ENCODE measurements at regions of chr9 and their contacts with region 1.

Region 1: DNA sequence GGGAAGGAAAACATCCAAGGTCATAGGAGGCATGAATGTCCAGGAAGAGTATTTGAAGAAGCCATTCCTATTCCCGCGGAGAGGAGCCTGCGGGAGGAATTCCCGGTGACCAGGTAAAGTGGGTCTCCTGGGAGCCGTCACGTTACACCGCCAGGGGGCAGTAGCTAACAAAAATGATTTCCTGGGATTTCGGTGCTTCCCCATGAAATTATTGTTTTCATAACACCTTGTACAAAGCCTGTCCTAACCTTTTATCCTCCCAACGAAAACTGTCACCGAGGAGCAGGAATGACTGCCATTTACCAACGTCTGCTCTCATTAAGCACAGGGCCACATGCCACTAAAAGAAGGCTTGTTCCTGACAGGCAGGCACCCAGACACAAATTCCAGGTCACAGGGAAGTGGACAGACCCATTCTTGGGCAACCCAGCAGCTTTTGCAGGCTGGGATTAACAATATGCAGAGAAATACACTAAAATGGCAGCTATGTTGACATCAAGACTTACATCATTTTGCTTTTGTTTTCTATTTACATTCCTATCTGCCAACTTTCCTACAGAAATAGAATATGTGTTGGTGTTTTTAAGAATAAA is 41.2 kb upstream of the CTSL start:
- DNase-seq: peak in 1 of 4 donors; percentile 45
- ATAC-seq: peak; percentile 74
- H3K4me3 ChIP-seq: no peak overlapping the region
- H3K27ac ChIP-seq: peak overlapping the region; percentile 13 to 65
- H3K4me1 ChIP-seq: peaks cover 8 to 19% of the 10 kb centered on the region in 2 donors
- H3K27me3 ChIP-seq: no peaks in the 10 kb centered on the region
- CTCF ChIP-seq: peak; percentile 46 to 67

Region 2: GRCh38 chr9:87812375-87813118 is 127.8 kb after region 1 on chr9:
- intact Hi-C with region 1: loop called in 1 of 2 experiments (anchors 10 kb)
- DNase-seq: peak in 2 of 4 donors; percentile 16 to 34
- ATAC-seq: peak; percentile 71
- H3K4me3 ChIP-seq: no peak overlapping the region
- H3K27ac ChIP-seq: no peak overlapping the region
- H3K4me1 ChIP-seq: peaks cover 3 to 13% of the 10 kb centered on the region in 2 donors
- H3K27me3 ChIP-seq: no peaks in the 10 kb centered on the region
- CTCF ChIP-seq: peak; percentile 71 to 89

Measured in left lung (tissue), 14 donors.